IMR-90 (cell line): ENCODE measurements at regions of chr13 and their contacts with region 1.

Region 1: DNA sequence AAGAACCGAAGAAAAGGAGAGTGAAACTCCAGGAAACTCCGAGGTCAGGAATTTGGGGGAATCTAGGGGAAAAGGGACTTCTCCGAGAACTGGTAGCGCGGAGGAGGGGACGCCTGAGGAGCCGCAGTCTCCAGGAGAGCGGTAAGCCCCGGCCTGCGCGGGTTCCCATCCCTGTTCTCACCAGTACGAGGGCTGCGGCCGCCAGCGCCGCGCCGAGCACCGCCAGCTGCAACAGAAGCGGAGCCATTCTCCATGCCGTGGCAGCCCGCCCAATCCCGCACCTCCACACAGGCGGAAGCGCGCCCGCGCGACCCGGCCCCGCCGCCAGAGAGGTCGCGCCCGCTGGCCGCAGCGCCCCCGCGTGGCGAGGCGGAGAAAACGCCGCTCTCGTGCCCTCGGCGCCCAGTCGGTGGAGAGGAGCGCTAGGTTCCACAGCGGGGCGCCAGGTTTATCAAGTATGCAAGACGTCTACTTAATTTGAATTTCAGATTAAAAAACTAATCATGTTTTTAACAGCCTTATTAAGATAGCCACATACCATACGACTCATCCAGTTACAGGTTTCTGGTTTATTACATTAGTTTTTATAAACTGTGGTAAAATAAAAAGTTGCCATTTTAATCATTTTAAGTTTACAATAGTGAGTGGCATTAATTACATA is at the start of gene ALG5:
- DNase-seq: peak; percentile 84
- ATAC-seq: peak; percentile 83
- H3K4me3 ChIP-seq: peak within 1 kb of the TSS; percentile 71
- H3K27ac ChIP-seq: peak within 1 kb of the TSS; percentile 100
- H3K4me1 ChIP-seq: no peaks in the 10 kb centered on the region; the same call in 1 of the 2 replicates
- H3K27me3 ChIP-seq: no peaks in the 10 kb centered on the region
- CTCF ChIP-seq: peak; percentile 98
- POLR2A ChIP-seq: peak; percentile 78
- RAD21 ChIP-seq: peak; percentile 42
- total RNA-seq, gene ALG5: 19.4 and 29.4 TPM in 2 replicates

Region 2: GRCh38 chr13:36346222-36347083 is 652.7 kb before region 1 on chr13 and contains the start of gene SPART:
- CTCF ChIA-PET with region 1: no interaction called
- POLR2A ChIA-PET with region 1: no interaction called
- dilution Hi-C with region 1: no loop called
- in situ Hi-C with region 1: loop called (anchors 25 kb)
- intact Hi-C with region 1: loop called (anchors 10 kb)
- DNase-seq: peak; percentile 88
- ATAC-seq: peak; percentile 89
- H3K4me3 ChIP-seq: peak within 1 kb of the TSS; percentile 82
- H3K27ac ChIP-seq: peak within 1 kb of the TSS; percentile 96
- H3K4me1 ChIP-seq: peaks cover 5% of the 10 kb centered on the region; the same call in 1 of the 2 replicates
- H3K27me3 ChIP-seq: no peaks in the 10 kb centered on the region
- CTCF ChIP-seq: peak; percentile 99
- POLR2A ChIP-seq: peak; percentile 66
- RAD21 ChIP-seq: peak; percentile 86
- total RNA-seq, gene SPART: 86.4 and 110 TPM in 2 replicates

Region 3: DNA sequence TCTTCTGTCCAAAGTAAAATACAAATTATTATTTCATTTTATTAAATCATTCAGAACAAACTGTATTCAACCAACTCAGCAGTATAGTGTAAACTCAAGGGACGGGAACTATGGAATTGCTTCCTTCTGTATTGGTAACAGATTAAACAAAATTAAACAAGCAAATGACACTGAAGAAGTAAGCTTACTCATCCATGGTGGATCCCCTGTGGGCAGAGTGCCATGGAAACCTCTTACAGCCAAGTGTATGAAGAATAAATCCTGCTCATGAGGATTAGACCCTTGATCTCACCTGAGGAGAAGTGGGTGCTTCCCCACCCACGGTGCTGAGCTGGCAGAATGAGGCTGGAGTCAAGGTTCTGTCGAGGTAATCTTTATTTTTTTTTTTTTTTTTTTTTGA is 198.1 kb before region 1 on chr13:
- CTCF ChIA-PET with region 1: no interaction called
- POLR2A ChIA-PET with region 1: interaction called, 10 read pairs
- dilution Hi-C with region 1: no loop called
- in situ Hi-C with region 1: no loop called
- intact Hi-C with region 1: no loop called
- DNase-seq: no peak
- ATAC-seq: no peak
- H3K4me3 ChIP-seq: no peak overlapping the region
- H3K27ac ChIP-seq: no peak overlapping the region
- H3K4me1 ChIP-seq: no peaks in the 10 kb centered on the region
- H3K27me3 ChIP-seq: peaks cover 2% of the 10 kb centered on the region
- CTCF ChIP-seq: no peak
- POLR2A ChIP-seq: no peak
- RAD21 ChIP-seq: no peak

Region 4: DNA sequence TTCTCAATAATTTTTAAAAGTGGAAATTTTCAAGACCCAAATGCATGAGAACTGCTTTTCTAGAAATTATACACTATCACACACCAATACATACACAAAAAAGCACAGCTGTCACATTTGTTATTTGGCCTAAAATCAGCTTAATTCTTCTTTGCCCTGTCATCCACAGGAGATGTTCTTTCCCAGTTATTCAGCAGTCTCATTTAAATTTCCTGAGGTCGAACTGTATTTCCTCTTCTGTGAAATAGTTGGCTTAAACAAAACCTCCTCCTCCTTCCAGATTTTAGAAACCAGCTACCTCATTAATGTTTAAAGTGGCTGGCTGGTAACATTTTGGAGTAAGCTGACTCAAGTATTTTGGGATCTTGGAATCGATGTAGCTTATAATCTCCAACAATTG is 118.2 kb before region 1 on chr13:
- CTCF ChIA-PET with region 1: no interaction called
- POLR2A ChIA-PET with region 1: interaction called, 13 read pairs
- dilution Hi-C with region 1: no loop called
- in situ Hi-C with region 1: no loop called
- intact Hi-C with region 1: no loop called
- DNase-seq: peak; percentile 15
- ATAC-seq: no peak
- H3K4me3 ChIP-seq: no peak overlapping the region
- H3K27ac ChIP-seq: no peak overlapping the region
- H3K4me1 ChIP-seq: peaks cover 6% of the 10 kb centered on the region
- H3K27me3 ChIP-seq: no peaks in the 10 kb centered on the region
- CTCF ChIP-seq: no peak
- POLR2A ChIP-seq: no peak
- RAD21 ChIP-seq: no peak